ENCODE measurements at regions of chr1 and their contacts with region 1.

Region 1: DNA sequence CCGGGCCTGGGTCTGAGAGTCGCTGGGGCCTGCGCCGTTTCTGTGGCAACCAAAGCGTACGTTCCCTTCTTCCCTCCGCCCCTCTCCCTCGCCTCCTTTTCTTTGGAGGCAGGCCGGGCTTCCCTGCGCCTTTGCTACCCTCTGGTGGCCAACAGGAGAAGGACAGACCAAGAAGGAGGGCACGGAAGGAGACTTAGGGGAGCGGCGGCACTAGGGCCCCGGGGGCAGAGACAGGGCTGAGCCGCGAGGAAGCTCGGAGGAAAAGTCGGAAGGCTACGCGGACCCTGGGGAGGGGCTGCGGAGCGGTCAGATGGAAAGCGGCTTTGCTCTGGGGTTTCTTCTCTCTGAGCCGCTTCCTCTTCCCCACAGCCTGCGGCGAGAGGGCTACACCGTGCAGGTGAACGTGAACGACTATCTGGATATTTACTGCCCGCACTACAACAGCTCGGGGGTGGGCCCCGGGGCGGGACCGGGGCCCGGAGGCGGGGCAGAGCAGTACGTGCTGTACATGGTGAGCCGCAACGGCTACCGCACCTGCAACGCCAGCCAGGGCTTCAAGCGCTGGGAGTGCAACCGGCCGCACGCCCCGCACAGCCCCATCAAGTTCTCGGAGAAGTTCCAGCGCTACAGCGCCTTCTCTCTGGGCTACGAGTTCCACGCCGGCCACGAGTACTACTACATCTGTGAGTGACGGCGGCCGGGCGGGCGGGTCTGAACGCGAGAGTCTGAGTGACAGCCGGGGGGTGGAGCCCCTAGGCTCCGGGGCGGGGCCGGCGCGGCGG is 6.3 kb downstream of the EFNA3 start:
- DNase-seq: peak; percentile 98
- H3K4me3 Mint-ChIP-seq: peak overlapping the region; percentile 92
- H3K27ac Mint-ChIP-seq: peak overlapping the region; percentile 93
- H3K4me1 Mint-ChIP-seq: peaks cover 36% of the 10 kb centered on the region
- H3K27me3 Mint-ChIP-seq: peaks cover 28% of the 10 kb centered on the region

Region 2: DNA sequence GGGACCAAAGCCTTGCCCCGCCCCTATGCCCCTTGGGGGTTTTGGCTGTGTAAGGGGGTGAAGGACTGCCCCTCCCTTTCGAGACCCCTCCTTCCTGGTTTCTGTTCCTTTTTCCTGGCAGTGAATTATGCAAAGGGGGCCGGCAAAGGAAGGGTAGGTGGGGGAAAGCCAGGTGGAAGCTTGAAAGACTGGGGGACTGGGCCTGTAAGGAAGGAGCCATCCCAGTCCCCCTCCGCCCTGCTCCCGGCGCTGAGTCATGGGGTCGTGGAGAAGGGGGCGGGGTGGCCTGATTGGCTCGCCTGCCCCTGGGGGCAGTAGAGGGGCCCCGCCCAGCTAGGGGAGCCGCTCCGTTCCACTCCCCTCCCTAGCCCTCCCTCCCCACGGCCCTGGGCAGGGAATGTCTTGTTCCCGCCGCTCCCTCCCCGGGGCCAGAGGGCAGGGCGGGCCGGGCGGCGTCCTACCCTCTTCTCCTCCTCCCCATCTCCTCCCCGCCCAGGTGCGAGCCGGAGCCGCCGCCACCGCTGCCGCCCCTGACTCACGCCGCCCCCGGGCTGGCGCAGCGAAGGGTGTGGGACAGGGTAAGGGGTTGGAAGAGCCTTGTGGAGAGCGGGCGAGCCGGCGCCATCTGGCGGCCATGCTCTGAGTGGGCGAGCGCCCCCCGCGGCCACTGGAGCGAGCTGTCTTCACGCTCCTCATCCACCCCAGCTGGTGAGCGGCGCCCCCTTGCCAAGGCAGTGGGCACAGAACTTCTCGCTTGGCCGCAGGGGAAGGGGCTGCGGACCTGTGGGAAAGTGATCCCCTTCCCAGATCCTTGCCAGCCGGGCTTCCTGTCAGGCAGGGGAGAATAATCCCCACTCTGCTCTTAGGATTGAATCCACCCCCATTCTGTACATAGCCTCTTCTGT is 67.6 kb before region 1 on chr1:
- intact Hi-C with region 1: loop called (anchors 1 kb)
- DNase-seq: peak; percentile 96
- H3K4me3 Mint-ChIP-seq: peak overlapping the region; percentile 78
- H3K27ac Mint-ChIP-seq: peak overlapping the region; percentile 37
- H3K4me1 Mint-ChIP-seq: peaks cover 52% of the 10 kb centered on the region
- H3K27me3 Mint-ChIP-seq: no peaks in the 10 kb centered on the region

Region 3: DNA sequence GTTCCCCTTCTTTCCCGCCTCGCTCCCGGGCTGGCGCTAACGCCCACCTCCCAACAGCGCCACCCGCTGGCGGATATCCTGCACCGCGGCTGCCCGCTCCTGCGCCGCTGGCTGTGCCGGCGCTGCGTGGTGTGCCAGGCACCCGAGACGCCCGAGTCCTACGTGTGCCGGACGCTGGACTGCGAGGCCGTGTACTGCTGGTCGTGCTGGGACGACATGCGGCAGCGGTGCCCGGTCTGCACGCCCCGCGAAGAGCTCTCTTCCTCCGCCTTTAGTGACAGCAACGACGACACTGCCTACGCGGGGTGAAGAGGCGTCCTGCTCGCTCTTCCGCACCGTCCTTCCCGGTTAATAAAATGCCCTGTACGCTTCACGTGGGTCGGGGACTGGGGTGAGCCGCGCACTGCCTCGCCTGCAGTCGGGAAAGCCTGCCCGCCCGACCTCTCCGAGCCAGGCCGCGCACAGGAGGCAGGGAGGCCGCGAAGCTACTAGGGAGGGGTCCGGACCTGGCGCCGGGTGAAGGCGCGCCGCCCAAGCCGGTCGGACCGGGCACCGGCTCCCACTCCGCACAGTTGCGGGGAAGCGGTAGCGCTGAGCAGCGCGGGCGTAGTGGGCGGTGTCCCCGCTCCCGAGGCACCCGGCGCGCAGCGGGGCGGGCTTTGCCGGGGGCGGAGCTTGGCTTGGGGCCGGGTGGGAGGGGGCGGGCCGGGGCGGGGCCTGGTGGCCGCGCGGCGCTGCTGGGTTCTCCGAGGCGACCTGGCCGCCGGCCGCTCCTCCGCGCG is 34.2 kb before region 1 on chr1 and contains the start of gene ADAM15:
- intact Hi-C with region 1: loop called (anchors 1 kb)
- DNase-seq: peak; percentile 96
- H3K4me3 Mint-ChIP-seq: peak within 1 kb of the TSS; percentile 88
- H3K27ac Mint-ChIP-seq: peak within 1 kb of the TSS; percentile 89
- H3K4me1 Mint-ChIP-seq: peaks cover 22% of the 10 kb centered on the region
- H3K27me3 Mint-ChIP-seq: no peaks in the 10 kb centered on the region
- total RNA-seq, gene ADAM15: 79.7 and 84.5 TPM in 2 replicates

Region 4: GRCh38 chr1:155127105-155127964 is 42.4 kb after region 1 on chr1 and contains the start of gene EFNA1:
- intact Hi-C with region 1: loop called (anchors 2 kb)
- DNase-seq: peak; percentile 87
- H3K4me3 Mint-ChIP-seq: peak within 1 kb of the TSS; percentile 84
- H3K27ac Mint-ChIP-seq: no peak within 1 kb of the TSS
- H3K4me1 Mint-ChIP-seq: peaks cover 27% of the 10 kb centered on the region
- H3K27me3 Mint-ChIP-seq: peaks cover 56% of the 10 kb centered on the region
- total RNA-seq, gene EFNA1: 0.24 TPM in 1 of 2 replicates, not detected in the other

Region 5: GRCh38 chr1:155172732-155173477 is 88.0 kb after region 1 on chr1 and contains the start of gene KRTCAP2:
- intact Hi-C with region 1: loop called (anchors 2 kb)
- DNase-seq: peak; percentile 98
- H3K4me3 Mint-ChIP-seq: peak within 1 kb of the TSS; percentile 99
- H3K27ac Mint-ChIP-seq: peak within 1 kb of the TSS; percentile 99
- H3K4me1 Mint-ChIP-seq: peaks cover 51% of the 10 kb centered on the region
- H3K27me3 Mint-ChIP-seq: peaks cover 6% of the 10 kb centered on the region
- total RNA-seq, gene KRTCAP2: 244 and 245 TPM in 2 replicates